CD4-positive, alpha-beta T cell (primary cell): ENCODE measurements at regions of chr5 and their contacts with region 1.

Region 1: GRCh38 chr5:35785601-35786085 is 71.0 kb upstream of the IL7R start:
- DNase-seq: peak in 4 of 14 experiments; percentile 15 to 43 (median 25)
- ATAC-seq: peak; percentile 71
- H3K4me3 ChIP-seq: no peak overlapping the region
- H3K4me3 Mint-ChIP-seq: peak overlapping the region; percentile 64
- H3K27ac ChIP-seq: no peak overlapping the region
- H3K27ac Mint-ChIP-seq: peak overlapping the region; percentile 79
- H3K4me1 ChIP-seq: peaks cover 40% of the 10 kb centered on the region
- H3K4me1 Mint-ChIP-seq: peaks cover 86% of the 10 kb centered on the region
- H3K27me3 ChIP-seq: no peaks in the 10 kb centered on the region
- H3K27me3 Mint-ChIP-seq: no peaks in the 10 kb centered on the region
- CTCF ChIP-seq: no peak

Region 2: GRCh38 chr5:35707659-35708058 is 78.0 kb before region 1 on chr5:
- CTCF ChIA-PET with region 1: no interaction called
- POLR2A ChIA-PET with region 1: no interaction called
- intact Hi-C with region 1: no loop called
- DNase-seq: no peak
- ATAC-seq: peak; percentile 29
- H3K4me3 ChIP-seq: no peak overlapping the region
- H3K4me3 Mint-ChIP-seq: no peak overlapping the region
- H3K27ac ChIP-seq: no peak overlapping the region
- H3K27ac Mint-ChIP-seq: no peak overlapping the region
- H3K4me1 ChIP-seq: peaks cover 4% of the 10 kb centered on the region
- H3K4me1 Mint-ChIP-seq: peaks cover 25% of the 10 kb centered on the region
- H3K27me3 ChIP-seq: no peaks in the 10 kb centered on the region
- H3K27me3 Mint-ChIP-seq: no peaks in the 10 kb centered on the region
- CTCF ChIP-seq: no peak

Region 3: DNA sequence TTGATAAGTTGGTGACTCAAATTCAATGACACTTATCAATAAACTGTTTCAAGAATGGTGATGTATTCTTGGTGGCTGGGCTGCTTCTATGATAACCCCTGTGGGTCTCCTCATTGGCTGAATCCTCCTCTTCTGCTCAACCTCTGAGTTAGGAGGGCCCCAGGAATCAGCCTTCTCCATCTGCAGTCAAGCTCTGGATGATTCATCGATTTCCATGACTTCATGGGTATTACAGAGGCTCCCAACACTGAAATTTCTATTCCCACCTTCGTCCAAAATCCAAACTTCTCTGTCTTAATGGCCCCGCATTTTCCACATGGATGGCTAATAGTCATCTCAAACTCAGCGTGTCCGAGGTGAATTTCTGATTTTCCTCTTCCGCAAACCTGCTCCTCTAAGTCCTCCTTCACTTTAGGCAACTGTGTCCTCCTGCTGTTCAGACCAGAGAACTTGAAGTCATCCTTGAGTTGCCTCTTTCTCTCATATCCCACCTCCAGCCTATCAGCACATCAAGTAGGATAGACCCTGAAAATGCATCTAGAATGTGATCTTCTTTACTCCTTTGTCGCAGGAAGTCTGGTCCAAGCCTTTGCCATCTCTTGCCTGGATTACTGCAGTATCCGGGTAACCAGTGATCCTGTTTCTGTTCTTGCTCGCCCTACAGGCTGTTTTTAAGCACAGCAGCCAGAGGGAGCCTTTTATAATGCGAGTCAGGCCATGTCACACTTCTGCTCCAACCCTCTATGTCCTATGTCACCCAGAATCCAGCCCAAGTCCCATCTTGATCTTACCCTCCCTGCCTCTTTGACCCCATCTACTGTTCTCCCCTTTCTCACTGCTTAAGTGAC is 29.7 kb after region 1 on chr5:
- CTCF ChIA-PET with region 1: interaction called, 3 read pairs
- POLR2A ChIA-PET with region 1: interaction called, 71 read pairs
- intact Hi-C with region 1: loop called in 1 of 2 experiments (anchors 1 kb)
- DNase-seq: peak in 4 of 14 experiments; percentile 47 to 75 (median 69)
- ATAC-seq: peak; percentile 27
- H3K4me3 ChIP-seq: no peak overlapping the region
- H3K4me3 Mint-ChIP-seq: no peak overlapping the region
- H3K27ac ChIP-seq: peak overlapping the region; percentile 8 to 59
- H3K27ac Mint-ChIP-seq: no peak overlapping the region
- H3K4me1 ChIP-seq: peaks cover 65% of the 10 kb centered on the region
- H3K4me1 Mint-ChIP-seq: peaks cover 39% of the 10 kb centered on the region
- H3K27me3 ChIP-seq: no peaks in the 10 kb centered on the region
- H3K27me3 Mint-ChIP-seq: no peaks in the 10 kb centered on the region
- CTCF ChIP-seq: peak; percentile 64

Region 4: GRCh38 chr5:35869685-35870277 is 84.1 kb after region 1 on chr5:
- CTCF ChIA-PET with region 1: no interaction called
- POLR2A ChIA-PET with region 1: interaction called, 384 read pairs
- intact Hi-C with region 1: no loop called
- DNase-seq: no peak
- ATAC-seq: peak; percentile 16
- H3K4me3 ChIP-seq: no peak overlapping the region
- H3K4me3 Mint-ChIP-seq: peak overlapping the region; percentile 31
- H3K27ac ChIP-seq: peak overlapping the region; percentile 1 to 34
- H3K27ac Mint-ChIP-seq: peak overlapping the region; percentile 99
- H3K4me1 ChIP-seq: peaks cover 52% of the 10 kb centered on the region
- H3K4me1 Mint-ChIP-seq: peaks cover 96% of the 10 kb centered on the region
- H3K27me3 ChIP-seq: no peaks in the 10 kb centered on the region
- H3K27me3 Mint-ChIP-seq: no peaks in the 10 kb centered on the region
- CTCF ChIP-seq: no peak